Activated T-helper 1 cell treated with anti-CD3 and anti-CD28 coated beads, Interleukin-12 subunit alpha, Interleukin-12 subunit beta, Interleukin-2, Interleukin-4 antibody, amounts not matched to agents 30 ng/mL and 10 ng/mL and 1 ng/mL, durations not matched to agents 14 hours and 24 hours and 36 hours (primary cell): ENCODE measurements at regions of chr9 and their contacts with region 1.

Region 1: DNA sequence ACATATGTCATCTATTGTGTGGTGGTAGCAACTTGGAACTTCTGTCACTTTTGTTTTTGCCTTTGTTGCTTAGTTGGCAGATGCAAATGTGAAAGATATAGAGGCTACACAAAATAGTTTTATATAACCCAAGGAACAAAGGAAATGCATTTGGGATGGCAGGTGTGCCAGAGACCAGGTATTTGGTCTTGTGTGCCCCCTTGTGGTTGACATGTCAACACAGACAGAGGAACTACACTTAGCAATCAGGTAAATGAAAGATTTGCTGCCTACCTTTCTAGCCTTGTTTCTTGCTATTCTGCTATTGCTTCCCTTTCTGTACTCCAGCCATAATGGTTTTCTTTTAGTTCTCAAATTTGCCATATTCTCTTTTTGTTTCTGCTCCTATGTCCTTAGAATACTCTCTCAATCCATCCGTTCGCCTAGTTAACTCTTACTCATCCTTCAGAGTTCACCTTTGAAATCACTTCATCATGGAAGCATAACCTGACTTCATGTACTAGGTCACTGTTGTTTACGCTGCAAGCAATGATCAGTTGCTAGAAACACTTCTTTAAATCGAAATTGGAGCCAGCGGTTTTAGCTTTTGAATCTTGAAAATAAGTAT is 119.5 kb downstream of the TRPM3 start:
- DNase-seq: no peak
- H3K4me3 Mint-ChIP-seq: no peak overlapping the region
- H3K27ac Mint-ChIP-seq: no peak overlapping the region
- H3K4me1 Mint-ChIP-seq: no peaks in the 10 kb centered on the region
- H3K27me3 Mint-ChIP-seq: no peaks in the 10 kb centered on the region

Region 2: GRCh38 chr9:71072587-71072986 is 70.7 kb after region 1 on chr9:
- intact Hi-C with region 1: loop called (anchors 10 kb)
- DNase-seq: no peak
- H3K4me3 Mint-ChIP-seq: no peak overlapping the region
- H3K27ac Mint-ChIP-seq: no peak overlapping the region
- H3K4me1 Mint-ChIP-seq: no peaks in the 10 kb centered on the region
- H3K27me3 Mint-ChIP-seq: no peaks in the 10 kb centered on the region